T-cell (primary cell): ENCODE measurements at regions of chr2 and their contacts with region 1.

Region 1: GRCh38 chr2:55437515-55438390 is 18.1 kb upstream of the CCDC88A start:
- DNase-seq: no peak
- ATAC-seq: no peak
- H3K4me3 ChIP-seq: no peak overlapping the region
- H3K4me3 Mint-ChIP-seq: no peak overlapping the region
- H3K27ac ChIP-seq: no peak overlapping the region
- H3K27ac Mint-ChIP-seq: no peak overlapping the region
- H3K4me1 ChIP-seq: no peaks in the 10 kb centered on the region
- H3K4me1 Mint-ChIP-seq: no peaks in the 10 kb centered on the region
- H3K27me3 ChIP-seq: peaks cover 0 to 3% of the 10 kb centered on the region in 2 experiments
- H3K27me3 Mint-ChIP-seq: peaks cover 3 to 11% of the 10 kb centered on the region in 2 donors

Region 2: GRCh38 chr2:55649211-55649610 is 211.5 kb after region 1 on chr2:
- CTCF ChIA-PET with region 1: no interaction called
- POLR2A ChIA-PET with region 1: interaction called in 1 of 2 experiments, 11 read pairs
- DNase-seq: no peak
- ATAC-seq: no peak
- H3K4me3 ChIP-seq: no peak overlapping the region
- H3K4me3 Mint-ChIP-seq: no peak overlapping the region
- H3K27ac ChIP-seq: no peak overlapping the region
- H3K27ac Mint-ChIP-seq: no peak overlapping the region
- H3K4me1 ChIP-seq: no peaks in the 10 kb centered on the region
- H3K4me1 Mint-ChIP-seq: no peaks in the 10 kb centered on the region
- H3K27me3 ChIP-seq: no peaks in the 10 kb centered on the region
- H3K27me3 Mint-ChIP-seq: no peaks in the 10 kb centered on the region